ENCODE measurements at regions of chr1 and their contacts with region 1.

Region 1: GRCh38 chr1:210233216-210234020 is 822 bp downstream of the SERTAD4 start:
- DNase-seq: peak; percentile 69
- H3K4me3 Mint-ChIP-seq: peak overlapping the region; percentile 74
- H3K27ac Mint-ChIP-seq: no peak overlapping the region
- H3K4me1 Mint-ChIP-seq: peaks cover 31% of the 10 kb centered on the region
- H3K27me3 Mint-ChIP-seq: no peaks in the 10 kb centered on the region
- CTCF ChIP-seq: no peak

Region 2: GRCh38 chr1:210104103-210104502 is 129.3 kb before region 1 on chr1:
- CTCF ChIA-PET with region 1: no interaction called
- intact Hi-C with region 1: no loop called
- DNase-seq: no peak
- H3K4me3 Mint-ChIP-seq: no peak overlapping the region
- H3K27ac Mint-ChIP-seq: no peak overlapping the region
- H3K4me1 Mint-ChIP-seq: peaks cover 24% of the 10 kb centered on the region
- H3K27me3 Mint-ChIP-seq: no peaks in the 10 kb centered on the region
- CTCF ChIP-seq: no peak

Region 3: DNA sequence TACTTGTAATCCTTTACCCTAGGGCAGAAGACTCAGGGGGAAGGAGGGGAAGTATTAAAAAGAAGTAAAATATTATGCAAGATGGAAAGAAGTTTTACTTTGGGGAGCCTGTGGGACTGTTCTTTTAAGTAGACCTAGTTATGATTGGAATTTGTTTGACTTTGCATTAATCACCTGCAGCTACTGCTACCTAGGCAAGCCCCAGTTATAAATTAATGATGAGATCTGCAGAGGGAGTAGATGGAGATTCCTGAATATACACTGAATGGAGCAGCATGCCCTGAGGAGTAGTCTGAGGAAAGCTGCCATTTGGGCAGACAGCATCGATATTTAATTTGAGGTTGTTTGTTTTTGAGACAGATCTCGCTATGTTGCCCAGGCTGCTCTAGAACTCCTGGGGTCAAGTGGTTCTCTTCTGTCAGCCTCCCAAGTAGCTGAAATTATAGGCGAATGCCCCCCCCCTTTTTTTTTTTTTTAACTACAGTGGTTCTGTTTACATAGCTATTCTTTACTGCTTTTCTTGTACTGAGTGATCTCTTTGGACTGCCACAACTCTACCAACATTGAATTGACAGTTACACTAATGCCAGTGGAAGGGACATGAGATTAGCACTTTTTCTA is 82.3 kb before region 1 on chr1:
- CTCF ChIA-PET with region 1: no interaction called
- intact Hi-C with region 1: loop called (anchors 5 kb)
- DNase-seq: no peak
- H3K4me3 Mint-ChIP-seq: no peak overlapping the region
- H3K27ac Mint-ChIP-seq: no peak overlapping the region
- H3K4me1 Mint-ChIP-seq: peaks cover 9% of the 10 kb centered on the region
- H3K27me3 Mint-ChIP-seq: no peaks in the 10 kb centered on the region
- CTCF ChIP-seq: no peak